Activated T-helper 1 cell treated with anti-CD3 and anti-CD28 coated beads, Interleukin-12 subunit alpha, Interleukin-12 subunit beta, Interleukin-2, Interleukin-4 antibody, amounts not matched to agents 30 ng/mL and 10 ng/mL and 1 ng/mL, durations not matched to agents 14 hours and 24 hours and 36 hours (primary cell): ENCODE measurements at regions of chr6 and their contacts with region 1.

Region 1: GRCh38 chr6:2940010-2940850 is 31.1 kb downstream of the SERPINB6 start:
- DNase-seq: peak; percentile 78
- H3K4me3 Mint-ChIP-seq: peak overlapping the region; percentile 48
- H3K27ac Mint-ChIP-seq: peak overlapping the region; percentile 89
- H3K4me1 Mint-ChIP-seq: peaks cover 55% of the 10 kb centered on the region
- H3K27me3 Mint-ChIP-seq: peaks cover 13% of the 10 kb centered on the region

Region 2: GRCh38 chr6:2791124-2791974 is 148.9 kb before region 1 on chr6:
- intact Hi-C with region 1: loop called (anchors 1 kb)
- DNase-seq: peak; percentile 46
- H3K4me3 Mint-ChIP-seq: peak overlapping the region; percentile 21
- H3K27ac Mint-ChIP-seq: peak overlapping the region; percentile 88
- H3K4me1 Mint-ChIP-seq: peaks cover 40% of the 10 kb centered on the region
- H3K27me3 Mint-ChIP-seq: no peaks in the 10 kb centered on the region

Region 3: GRCh38 chr6:2846873-2847224 is 93.4 kb before region 1 on chr6:
- intact Hi-C with region 1: loop called (anchors 1 kb)
- DNase-seq: no peak
- H3K4me3 Mint-ChIP-seq: peak overlapping the region; percentile 31
- H3K27ac Mint-ChIP-seq: peak overlapping the region; percentile 41
- H3K4me1 Mint-ChIP-seq: peaks cover 60% of the 10 kb centered on the region
- H3K27me3 Mint-ChIP-seq: no peaks in the 10 kb centered on the region

Region 4: GRCh38 chr6:2876210-2877056 is 63.8 kb before region 1 on chr6:
- intact Hi-C with region 1: loop called (anchors 1 kb)
- DNase-seq: no peak
- H3K4me3 Mint-ChIP-seq: peak overlapping the region; percentile 87
- H3K27ac Mint-ChIP-seq: peak overlapping the region; percentile 98
- H3K4me1 Mint-ChIP-seq: peaks cover 81% of the 10 kb centered on the region
- H3K27me3 Mint-ChIP-seq: no peaks in the 10 kb centered on the region

Region 5: DNA sequence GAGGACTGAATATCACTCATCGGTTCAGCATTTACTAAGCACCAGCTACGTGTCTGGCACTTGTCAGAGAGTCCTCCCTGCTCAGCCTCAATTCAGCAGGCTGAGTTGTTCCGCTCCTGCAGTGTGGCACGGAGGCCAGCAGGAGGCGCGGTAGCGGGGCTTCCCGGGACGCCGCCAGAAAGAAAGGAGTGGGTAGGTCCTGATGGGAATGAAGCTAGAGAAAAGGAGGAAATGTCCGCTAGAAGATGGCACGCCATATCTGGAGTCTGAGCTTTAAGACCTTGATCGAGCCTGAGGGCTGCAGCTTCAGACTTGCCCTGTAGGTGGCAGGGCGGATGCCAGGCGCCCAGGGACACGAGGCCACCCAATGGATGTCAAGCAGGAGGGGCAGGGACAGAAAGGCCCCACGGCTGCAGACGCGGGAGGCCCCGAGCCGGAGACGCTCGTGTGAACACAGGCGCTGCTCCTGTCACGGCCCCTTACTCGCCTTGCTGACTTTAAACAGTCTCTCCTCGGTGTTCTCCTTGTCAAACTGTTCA is 12.4 kb after region 1 on chr6:
- intact Hi-C with region 1: loop called (anchors 1 kb)
- DNase-seq: peak; percentile 36
- H3K4me3 Mint-ChIP-seq: peak overlapping the region; percentile 4
- H3K27ac Mint-ChIP-seq: no peak overlapping the region
- H3K4me1 Mint-ChIP-seq: peaks cover 14% of the 10 kb centered on the region
- H3K27me3 Mint-ChIP-seq: peaks cover 13% of the 10 kb centered on the region

Region 6: DNA sequence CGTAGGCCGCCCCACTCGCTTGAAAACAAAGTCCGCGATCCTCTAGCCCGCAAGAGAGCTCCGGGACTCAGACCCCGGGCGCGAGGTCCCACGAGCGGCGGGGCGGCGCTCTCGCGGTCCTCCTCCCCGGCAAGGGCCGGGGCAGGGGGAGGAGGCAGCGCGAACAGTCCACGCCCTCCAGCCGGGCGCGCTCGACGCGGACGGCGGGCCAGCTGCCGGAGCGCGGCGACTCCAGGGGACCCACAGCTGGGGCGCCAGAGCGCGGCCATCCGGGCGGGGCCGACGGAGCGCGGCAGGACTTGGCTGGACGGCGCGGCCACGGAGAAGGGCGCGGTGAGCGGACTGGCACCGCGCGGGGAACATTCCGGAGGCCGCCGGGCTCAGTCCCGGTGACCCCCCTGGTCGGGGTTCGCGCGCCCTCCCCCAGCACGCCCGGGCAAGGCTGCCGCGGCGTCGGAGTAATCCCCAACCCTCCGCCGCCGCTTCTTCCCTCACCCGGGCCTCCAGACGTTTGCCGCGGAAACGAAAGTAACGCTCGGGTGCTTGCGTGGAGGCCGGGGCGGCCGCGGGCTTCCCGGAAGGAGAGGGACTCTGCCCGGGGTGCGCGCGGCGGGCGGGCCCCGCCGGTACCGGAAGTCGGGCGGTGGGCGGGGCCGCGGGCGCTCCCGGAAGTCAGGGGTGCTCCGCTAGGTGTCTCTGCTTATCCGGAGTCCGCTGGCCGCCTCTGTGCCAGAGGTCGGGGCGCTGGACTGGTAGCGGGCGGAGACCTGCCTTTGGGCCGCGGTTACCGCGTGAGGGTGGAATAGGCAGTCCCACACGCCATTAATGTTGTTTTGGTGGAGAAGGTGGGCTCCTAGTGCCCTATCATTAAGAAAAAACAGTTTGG is 128.3 kb after region 1 on chr6 and contains the start of gene RIPK1:
- intact Hi-C with region 1: loop called (anchors 1 kb)
- DNase-seq: peak; percentile 96
- H3K4me3 Mint-ChIP-seq: peak within 1 kb of the TSS; percentile 93
- H3K27ac Mint-ChIP-seq: peak within 1 kb of the TSS; percentile 96
- H3K4me1 Mint-ChIP-seq: peaks cover 58% of the 10 kb centered on the region
- H3K27me3 Mint-ChIP-seq: no peaks in the 10 kb centered on the region
- total RNA-seq, gene RIPK1: 17.1 and 19.4 TPM in 2 replicates

Region 7: GRCh38 chr6:3209114-3210023 is 269.1 kb after region 1 on chr6:
- intact Hi-C with region 1: loop called (anchors 1 kb)
- DNase-seq: no peak
- H3K4me3 Mint-ChIP-seq: peak overlapping the region; percentile 43
- H3K27ac Mint-ChIP-seq: peak overlapping the region; percentile 89
- H3K4me1 Mint-ChIP-seq: peaks cover 41% of the 10 kb centered on the region
- H3K27me3 Mint-ChIP-seq: peaks cover 23% of the 10 kb centered on the region